IMR-90 (cell line): ENCODE measurements at regions of chr14 and their contacts with region 1.

Region 1: GRCh38 chr14:77023001-77023996 is 5.2 kb downstream of the IRF2BPL start:
- DNase-seq: peak; percentile 38
- ATAC-seq: no peak
- H3K4me3 ChIP-seq: peak overlapping the region; percentile 11; the same call in 1 of the 2 replicates
- H3K27ac ChIP-seq: peak overlapping the region; percentile 52; the same call in 1 of the 2 replicates
- H3K4me1 ChIP-seq: peaks cover 10% of the 10 kb centered on the region
- H3K27me3 ChIP-seq: no peaks in the 10 kb centered on the region
- CTCF ChIP-seq: peak; percentile 33; the same call in 1 of the 2 replicates
- POLR2A ChIP-seq: no peak; the same call in none of the 2 replicates
- RAD21 ChIP-seq: peak; percentile 39

Region 2: DNA sequence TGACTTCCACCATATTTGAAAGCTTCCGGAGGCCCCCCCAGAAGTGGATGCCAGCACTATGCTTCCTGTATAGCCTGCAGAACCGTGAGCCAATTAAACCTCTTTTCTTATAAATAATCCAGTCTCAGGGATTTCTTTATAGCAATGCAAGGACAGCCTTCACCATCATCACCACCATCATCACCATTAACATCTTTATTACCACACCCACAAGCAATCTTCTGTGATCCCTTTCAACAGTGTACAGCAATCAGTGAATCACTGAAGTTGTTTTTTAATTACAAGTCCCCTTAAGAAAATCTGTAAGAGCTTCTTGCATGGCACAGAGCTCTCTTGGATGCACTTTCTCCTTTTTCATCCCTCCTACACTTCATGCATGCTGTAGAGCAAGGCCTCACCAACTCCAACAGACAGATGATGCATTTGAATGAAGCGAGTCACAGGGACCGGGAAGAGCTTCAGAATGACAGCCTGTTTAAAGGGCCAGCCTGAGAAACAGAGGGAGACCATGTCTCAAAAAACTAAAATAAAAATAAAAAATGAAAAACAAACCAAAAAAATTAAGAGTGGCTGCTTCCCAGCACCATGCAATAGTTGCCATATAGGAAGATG is 345.7 kb before region 1 on chr14:
- CTCF ChIA-PET with region 1: no interaction called
- POLR2A ChIA-PET with region 1: no interaction called
- dilution Hi-C with region 1: no loop called
- in situ Hi-C with region 1: no loop called
- intact Hi-C with region 1: no loop called
- DNase-seq: no peak
- ATAC-seq: no peak
- H3K4me3 ChIP-seq: no peak overlapping the region
- H3K27ac ChIP-seq: no peak overlapping the region
- H3K4me1 ChIP-seq: no peaks in the 10 kb centered on the region
- H3K27me3 ChIP-seq: peaks cover 2% of the 10 kb centered on the region; the same call in 1 of the 2 replicates
- CTCF ChIP-seq: no peak
- POLR2A ChIP-seq: no peak
- RAD21 ChIP-seq: no peak

Region 3: GRCh38 chr14:76910371-76910890 is 112.9 kb before region 1 on chr14:
- CTCF ChIA-PET with region 1: interaction called, 25 read pairs
- POLR2A ChIA-PET with region 1: no interaction called
- dilution Hi-C with region 1: no loop called
- in situ Hi-C with region 1: loop called (anchors 5 kb)
- intact Hi-C with region 1: loop called (anchors 1 kb)
- DNase-seq: no peak
- ATAC-seq: no peak
- H3K4me3 ChIP-seq: no peak overlapping the region
- H3K27ac ChIP-seq: no peak overlapping the region
- H3K4me1 ChIP-seq: peaks cover 5% of the 10 kb centered on the region
- H3K27me3 ChIP-seq: no peaks in the 10 kb centered on the region
- CTCF ChIP-seq: no peak
- POLR2A ChIP-seq: no peak
- RAD21 ChIP-seq: no peak

Region 4: DNA sequence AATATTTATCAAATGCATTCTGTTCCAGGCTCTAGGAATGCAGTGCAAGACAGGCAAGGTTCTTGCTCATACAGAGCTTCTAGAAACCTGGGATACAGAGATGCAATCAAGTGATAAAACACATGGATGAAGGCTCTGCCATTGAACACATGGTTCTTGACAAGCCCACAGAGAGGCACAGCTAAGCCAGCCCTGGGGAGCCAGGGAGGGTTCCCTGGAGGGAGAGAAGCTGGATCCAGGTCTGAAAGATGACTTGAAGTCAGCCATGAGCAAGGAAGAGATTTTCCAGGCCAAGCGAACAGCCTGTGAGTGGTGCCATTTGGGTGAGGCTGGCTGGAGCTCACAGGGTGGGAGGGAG is 61.0 kb before region 1 on chr14:
- CTCF ChIA-PET with region 1: interaction called, 3 read pairs
- POLR2A ChIA-PET with region 1: interaction called, 6 read pairs
- dilution Hi-C with region 1: no loop called
- in situ Hi-C with region 1: no loop called
- intact Hi-C with region 1: loop called (anchors 1 kb)
- DNase-seq: no peak
- ATAC-seq: peak; percentile 25
- H3K4me3 ChIP-seq: peak overlapping the region; percentile 34
- H3K27ac ChIP-seq: peak overlapping the region; percentile 98
- H3K4me1 ChIP-seq: peaks cover 23% of the 10 kb centered on the region
- H3K27me3 ChIP-seq: no peaks in the 10 kb centered on the region
- CTCF ChIP-seq: no peak
- POLR2A ChIP-seq: no peak
- RAD21 ChIP-seq: no peak

Region 5: GRCh38 chr14:77002889-77003288 is 20.4 kb before region 1 on chr14:
- CTCF ChIA-PET with region 1: no interaction called
- POLR2A ChIA-PET with region 1: interaction called, 13 read pairs
- dilution Hi-C with region 1: no loop called
- in situ Hi-C with region 1: no loop called
- intact Hi-C with region 1: no loop called
- DNase-seq: no peak
- ATAC-seq: no peak
- H3K4me3 ChIP-seq: no peak overlapping the region
- H3K27ac ChIP-seq: no peak overlapping the region
- H3K4me1 ChIP-seq: peaks cover 17% of the 10 kb centered on the region
- H3K27me3 ChIP-seq: no peaks in the 10 kb centered on the region
- CTCF ChIP-seq: no peak
- POLR2A ChIP-seq: no peak
- RAD21 ChIP-seq: no peak

Region 6: DNA sequence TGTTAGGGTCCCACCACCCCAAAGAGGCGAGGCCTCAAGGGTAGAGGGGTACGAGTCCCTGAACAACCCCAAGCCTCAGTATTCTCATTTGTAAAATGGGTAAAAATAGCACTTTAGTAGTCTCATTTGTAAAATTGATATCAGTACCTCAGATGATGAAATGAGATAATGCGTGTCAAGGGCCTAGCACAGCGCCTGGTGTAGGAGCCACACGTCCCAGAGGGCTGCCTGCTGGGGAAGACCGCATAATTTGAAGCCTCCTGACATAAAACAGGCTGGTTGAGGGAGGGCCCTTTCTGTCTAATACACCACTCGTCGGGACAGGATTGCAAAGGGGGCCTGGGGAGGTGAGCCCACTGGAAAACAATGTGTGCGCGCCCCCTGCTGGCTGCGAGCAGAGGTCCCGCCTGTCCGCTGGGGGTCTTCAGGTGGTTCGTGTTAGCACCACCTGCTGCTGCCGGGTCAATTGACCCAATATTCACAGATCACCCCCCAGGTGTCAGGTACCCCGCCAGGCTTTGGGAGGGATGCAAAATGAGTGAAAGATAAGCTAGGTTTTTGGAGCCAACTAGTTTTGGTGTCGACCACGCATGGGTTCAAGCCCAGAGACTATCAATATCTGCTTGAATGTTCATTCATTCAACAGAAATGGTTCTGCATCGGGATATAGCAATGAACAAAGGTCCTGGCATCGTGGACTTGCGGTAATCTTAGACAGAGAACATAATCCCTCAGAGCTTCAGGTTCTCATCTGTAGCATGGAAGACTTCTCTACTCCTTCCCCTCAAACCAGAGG is 29.9 kb after region 1 on chr14:
- CTCF ChIA-PET with region 1: interaction called, 3 read pairs
- POLR2A ChIA-PET with region 1: interaction called, 5 read pairs
- dilution Hi-C with region 1: no loop called
- in situ Hi-C with region 1: no loop called
- intact Hi-C with region 1: loop called (anchors 1 kb)
- DNase-seq: peak; percentile 76
- ATAC-seq: peak; percentile 87
- H3K4me3 ChIP-seq: no peak overlapping the region
- H3K27ac ChIP-seq: no peak overlapping the region
- H3K4me1 ChIP-seq: peaks cover 10% of the 10 kb centered on the region
- H3K27me3 ChIP-seq: no peaks in the 10 kb centered on the region
- CTCF ChIP-seq: peak; percentile 94
- POLR2A ChIP-seq: peak; percentile 55; the same call in 1 of the 2 replicates
- RAD21 ChIP-seq: peak; percentile 98